AG04449 (cell line): ENCODE measurements at regions of chr10 and their contacts with region 1.

Region 1: DNA sequence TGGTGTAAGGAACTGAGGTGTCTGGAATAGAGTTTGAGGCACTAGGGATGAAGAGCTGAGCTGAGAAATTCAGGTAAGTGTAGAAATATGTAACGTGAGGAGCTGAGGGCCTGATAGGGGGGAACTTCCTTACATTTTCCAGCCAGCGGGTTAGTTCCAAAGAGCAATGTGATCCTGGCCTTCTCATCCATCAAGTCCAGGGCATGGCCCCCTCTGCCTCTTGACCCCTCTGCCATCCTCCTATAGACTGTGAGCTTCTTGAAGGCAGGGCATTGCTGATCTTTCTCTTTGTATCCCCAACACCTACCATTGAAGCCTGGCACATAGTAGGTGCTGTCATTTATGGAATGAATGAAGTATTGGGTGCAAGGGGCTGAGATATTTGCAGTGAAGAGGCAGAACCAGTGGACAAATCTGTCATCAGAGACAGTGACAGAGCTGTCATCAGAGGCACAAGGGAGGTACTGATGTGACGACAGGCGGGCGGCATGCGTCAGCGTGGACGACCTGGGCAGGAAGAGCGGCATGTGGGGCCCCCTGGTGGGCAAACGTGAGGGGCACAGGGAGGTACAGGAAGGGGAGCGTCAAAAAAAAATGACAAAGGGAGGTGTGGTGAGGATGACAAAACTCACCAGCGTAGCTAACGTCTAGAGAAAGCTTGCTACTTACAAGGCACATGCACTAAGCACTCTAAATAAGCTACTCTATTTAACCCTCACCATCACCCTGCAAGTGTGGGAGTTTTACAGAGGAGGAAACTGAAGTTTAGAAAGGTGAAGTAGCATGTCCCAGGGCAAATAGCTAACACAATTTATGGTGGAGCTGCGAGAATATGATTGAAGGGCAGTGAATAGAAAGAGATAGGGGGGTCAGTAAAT is 5.2 kb upstream of the CAMK2G start:
- DNase-seq: no peak
- H3K4me3 ChIP-seq: no peak overlapping the region
- CTCF ChIP-seq: peak; percentile 96

Region 2: GRCh38 chr10:73723516-73723915 is 156.0 kb before region 1 on chr10:
- CTCF ChIA-PET with region 1: no interaction called
- POLR2A ChIA-PET with region 1: no interaction called
- DNase-seq: no peak
- H3K4me3 ChIP-seq: no peak overlapping the region
- CTCF ChIP-seq: no peak

Region 3: GRCh38 chr10:73779018-73779417 is 100.5 kb before region 1 on chr10:
- CTCF ChIA-PET with region 1: interaction called, 34 read pairs
- POLR2A ChIA-PET with region 1: interaction called, 3 read pairs
- DNase-seq: no peak
- H3K4me3 ChIP-seq: no peak overlapping the region
- CTCF ChIP-seq: no peak

Region 4: GRCh38 chr10:73837072-73837471 is 42.5 kb before region 1 on chr10:
- CTCF ChIA-PET with region 1: interaction called, 518 read pairs
- POLR2A ChIA-PET with region 1: no interaction called
- DNase-seq: no peak
- H3K4me3 ChIP-seq: no peak overlapping the region
- CTCF ChIP-seq: no peak

Region 5: DNA sequence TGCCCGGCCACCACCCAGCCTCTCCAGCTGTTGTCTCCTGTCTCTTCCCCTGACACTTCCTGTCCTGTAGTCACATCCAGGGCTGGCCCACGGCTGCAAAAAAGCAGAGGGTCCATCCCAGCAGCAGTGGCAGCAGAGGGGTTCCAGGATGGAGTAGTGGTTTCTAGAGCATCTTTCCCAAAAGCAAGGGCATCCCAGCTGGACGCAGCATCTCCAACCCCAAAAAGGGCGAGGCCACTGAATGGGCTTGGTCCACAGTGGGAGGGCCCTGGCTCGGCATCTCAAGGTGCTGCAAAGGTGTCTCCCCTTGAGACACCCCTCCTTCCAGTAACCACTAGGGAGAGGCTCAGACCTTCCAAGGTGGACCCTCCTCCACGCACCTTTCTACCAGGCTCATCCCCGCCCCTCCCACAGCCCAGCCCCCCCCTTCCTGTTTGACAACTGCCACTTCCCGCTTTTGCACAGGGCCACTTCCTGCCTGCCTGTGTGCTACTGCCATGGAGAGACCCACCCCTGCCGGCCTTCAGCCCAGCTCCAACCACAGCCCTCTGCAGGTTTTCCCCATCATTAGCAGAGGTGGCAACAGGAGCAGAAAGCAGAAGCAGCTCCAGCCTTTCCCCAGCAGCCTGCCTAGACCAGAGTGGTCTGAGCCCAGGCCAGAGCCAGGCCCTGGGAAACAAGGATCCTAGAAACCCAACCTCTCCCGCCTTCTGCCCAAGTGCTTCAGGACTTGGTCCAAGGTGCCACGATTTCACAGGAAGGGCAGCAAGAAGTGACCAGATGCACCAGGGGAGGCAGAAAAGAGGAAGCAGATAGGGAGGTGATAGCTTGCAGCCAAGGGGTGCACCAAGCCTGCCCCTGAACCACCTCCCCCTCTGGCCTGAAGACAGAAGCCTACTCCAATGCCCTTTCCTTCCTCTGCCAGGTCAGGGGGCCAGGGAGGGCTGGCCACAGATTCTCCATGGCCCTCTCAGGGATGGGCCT is 13.8 kb before region 1 on chr10:
- CTCF ChIA-PET with region 1: interaction called, 56 read pairs
- POLR2A ChIA-PET with region 1: no interaction called
- DNase-seq: no peak
- H3K4me3 ChIP-seq: no peak overlapping the region
- CTCF ChIP-seq: no peak

Region 6: DNA sequence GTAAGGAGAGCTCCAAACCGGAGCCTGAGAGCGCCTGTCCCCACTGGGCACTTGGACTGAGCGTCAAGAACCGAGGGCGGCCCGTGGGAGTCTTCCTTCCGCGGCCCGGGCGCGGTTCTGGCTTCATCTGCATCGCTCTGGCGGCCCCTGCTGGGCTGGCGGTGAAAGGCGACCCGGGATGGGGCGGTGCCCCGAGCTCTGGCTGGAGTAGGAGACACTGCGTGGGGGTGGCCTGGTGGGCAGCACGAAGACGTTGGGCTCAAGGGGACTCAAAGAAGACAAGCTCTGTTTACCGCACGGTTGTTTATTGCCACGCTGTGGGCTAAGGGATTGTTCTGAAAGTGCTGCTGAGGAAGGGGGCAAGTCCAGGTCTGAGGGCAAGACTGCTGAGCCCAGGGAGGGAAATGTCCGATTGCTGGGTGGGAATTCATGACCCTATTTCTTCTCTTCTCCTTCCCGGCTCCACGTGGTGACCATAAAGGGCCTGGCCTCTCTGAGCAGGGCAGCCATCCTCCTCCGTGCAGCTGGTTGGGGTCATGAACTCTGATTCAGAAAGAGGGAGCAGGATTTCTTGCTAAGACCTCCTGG is 61.2 kb after region 1 on chr10:
- CTCF ChIA-PET with region 1: interaction called, 806 read pairs
- POLR2A ChIA-PET with region 1: no interaction called
- DNase-seq: no peak
- H3K4me3 ChIP-seq: no peak overlapping the region; the same call in 1 of the 2 replicates
- CTCF ChIP-seq: peak; percentile 99

Region 7: GRCh38 chr10:73974309-73974946 is 94.9 kb after region 1 on chr10:
- CTCF ChIA-PET with region 1: no interaction called
- POLR2A ChIA-PET with region 1: no interaction called
- DNase-seq: no peak
- H3K4me3 ChIP-seq: no peak overlapping the region
- CTCF ChIP-seq: no peak

Region 8: GRCh38 chr10:74234569-74234968 is 355.0 kb after region 1 on chr10:
- CTCF ChIA-PET with region 1: interaction called, 10 read pairs
- POLR2A ChIA-PET with region 1: no interaction called
- DNase-seq: no peak
- H3K4me3 ChIP-seq: no peak overlapping the region
- CTCF ChIP-seq: no peak

Region 9: DNA sequence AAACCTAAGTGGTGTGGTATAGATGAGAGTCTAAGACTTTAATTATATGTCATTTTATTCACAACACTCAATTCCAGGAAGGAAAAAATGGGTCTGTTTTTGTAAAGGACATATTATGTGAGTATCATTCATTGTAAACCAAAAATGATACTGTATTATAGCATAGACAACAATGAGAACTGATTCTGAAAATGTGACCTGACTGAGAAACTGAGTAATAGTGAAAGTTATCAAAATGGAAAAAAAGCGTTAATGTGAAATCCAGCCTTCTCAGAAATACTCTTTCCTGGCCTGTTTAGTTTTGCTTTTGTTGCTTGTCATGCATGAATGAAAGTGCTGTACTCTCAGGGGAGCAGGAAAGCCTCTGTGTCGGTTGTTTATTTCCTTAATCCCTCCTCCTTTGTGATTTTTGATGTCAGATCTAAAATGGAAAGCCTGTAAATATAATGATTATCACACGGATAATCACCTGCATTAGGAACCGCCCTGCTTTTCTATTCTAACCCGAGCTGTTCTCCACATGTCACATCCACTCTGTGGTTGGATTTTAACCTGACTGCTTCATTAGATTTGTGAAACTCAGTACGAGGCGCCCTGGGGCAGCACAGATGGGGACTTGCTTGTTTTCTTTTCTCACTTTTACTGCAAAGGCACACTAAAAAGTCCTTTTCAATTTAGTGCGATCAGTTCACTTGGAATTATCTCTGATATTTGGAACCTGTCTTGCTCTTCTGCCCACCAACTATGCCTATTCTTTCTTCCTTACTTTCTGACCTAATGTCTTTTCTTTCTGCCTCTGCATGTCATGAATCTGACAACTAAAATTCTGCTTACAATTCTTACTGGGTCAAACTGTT is 705.9 kb after region 1 on chr10:
- CTCF ChIA-PET with region 1: no interaction called
- POLR2A ChIA-PET with region 1: no interaction called
- DNase-seq: no peak
- H3K4me3 ChIP-seq: no peak overlapping the region
- CTCF ChIP-seq: no peak